Adrenal gland (tissue), 19 donors: ENCODE measurements at regions of chr4 and their contacts with region 1.

Region 1: DNA sequence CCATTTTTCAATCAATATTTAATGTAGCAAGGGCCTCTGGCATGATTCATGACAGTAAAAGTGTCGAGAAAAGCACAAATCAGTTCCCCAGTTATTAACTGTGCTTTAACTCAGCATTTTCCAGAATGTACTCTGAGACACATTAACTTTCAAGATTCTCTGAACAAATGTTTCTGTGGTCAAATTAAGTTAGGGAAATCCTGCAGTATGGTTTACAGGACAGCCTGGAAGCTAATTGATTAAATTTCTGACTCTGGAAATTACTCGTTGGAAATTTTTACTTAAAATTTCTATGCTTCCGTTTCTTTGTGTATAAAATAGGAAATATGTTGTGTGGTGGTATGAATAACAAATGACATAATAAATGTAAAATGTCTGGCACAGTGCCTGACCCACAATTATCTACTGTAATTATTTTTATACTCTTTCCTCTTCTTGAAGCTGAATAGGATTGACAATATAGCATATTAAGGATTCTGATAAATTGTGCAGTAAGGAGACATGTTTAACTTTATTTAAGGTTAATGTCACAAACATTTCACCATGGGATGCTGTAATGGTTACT is 33.7 kb downstream of the STK32B start:
- DNase-seq: no peak
- H3K4me3 ChIP-seq: no peak overlapping the region
- H3K27ac ChIP-seq: no peak overlapping the region
- H3K4me1 ChIP-seq: no peaks in the 10 kb centered on the region
- H3K27me3 ChIP-seq: no peaks in the 10 kb centered on the region
- CTCF ChIP-seq: no peak
- POLR2A ChIP-seq: no peak

Region 2: DNA sequence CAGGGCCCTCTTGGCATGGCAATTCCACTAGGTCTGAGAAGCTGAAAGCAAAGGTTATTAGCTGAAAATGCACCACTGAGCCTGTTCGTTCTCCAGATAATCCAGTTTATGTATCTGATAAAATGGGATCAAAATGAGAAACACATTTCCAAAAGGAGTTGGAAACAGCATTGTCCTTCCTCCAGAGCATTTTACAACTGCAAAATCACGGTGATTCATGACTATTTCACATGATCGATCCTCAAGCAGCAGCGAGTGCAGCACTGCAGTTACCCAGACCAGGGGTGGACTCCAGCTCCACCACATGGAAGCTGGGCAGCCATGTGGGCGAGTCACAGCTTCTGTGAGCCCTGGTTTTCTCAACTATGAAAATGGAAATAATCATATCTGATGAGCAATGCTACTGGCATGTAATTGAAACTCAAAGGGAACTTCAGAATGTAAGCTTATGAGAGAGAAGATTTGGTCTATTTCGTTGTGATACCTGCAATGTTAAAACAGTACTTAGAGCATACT is 304.2 kb before region 1 on chr4:
- intact Hi-C with region 1: loop called in 1 of 2 experiments (anchors 10 kb)
- DNase-seq: no peak
- H3K4me3 ChIP-seq: no peak overlapping the region
- H3K27ac ChIP-seq: no peak overlapping the region
- H3K4me1 ChIP-seq: no peaks in the 10 kb centered on the region
- H3K27me3 ChIP-seq: no peaks in the 10 kb centered on the region
- CTCF ChIP-seq: no peak
- POLR2A ChIP-seq: no peak

Region 3: DNA sequence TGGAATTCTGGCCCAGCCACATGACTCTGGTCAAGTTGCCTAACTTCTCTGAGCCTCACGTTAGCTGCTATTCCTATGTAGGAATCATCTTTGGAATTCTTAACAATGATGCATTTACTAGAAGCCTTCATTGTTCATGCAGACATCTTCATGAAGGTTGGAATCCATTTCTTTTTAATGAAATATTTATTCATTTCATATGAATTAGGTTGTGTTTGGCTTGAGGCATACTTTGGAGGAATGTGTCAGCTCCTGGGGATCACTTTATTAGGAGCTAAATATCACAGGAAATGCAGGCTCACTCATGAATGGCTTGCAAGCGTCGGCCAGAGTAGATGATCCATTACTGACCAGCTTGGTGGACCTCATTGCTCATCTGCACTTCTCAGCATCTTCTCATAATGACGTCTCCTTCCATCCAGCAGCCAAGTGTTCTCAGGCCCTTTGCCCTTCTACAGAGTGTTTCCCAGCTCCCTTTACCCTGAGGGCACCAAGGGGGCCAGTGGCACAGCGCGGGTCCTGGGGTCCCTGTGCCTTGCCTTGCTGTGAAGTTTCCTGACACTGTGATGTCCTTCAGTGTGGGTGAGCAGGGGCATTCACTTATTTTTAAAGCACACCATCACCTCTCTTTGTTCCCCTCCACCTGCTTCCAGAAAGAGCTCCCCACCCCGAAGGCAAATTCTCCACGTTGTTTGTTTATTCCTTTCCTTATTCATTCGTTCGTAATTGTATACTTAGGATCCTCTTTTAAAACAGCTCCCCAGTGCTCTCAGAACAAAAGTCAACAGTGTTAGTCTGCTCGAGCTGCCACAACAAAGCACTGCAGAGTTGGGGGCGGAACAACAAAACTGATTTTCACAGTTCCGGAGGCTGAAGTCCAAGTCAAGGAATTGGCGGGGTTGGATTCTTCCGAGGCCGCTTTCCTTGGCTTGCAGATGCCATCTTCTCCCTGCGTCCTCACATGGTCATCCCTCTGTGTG is 73.1 kb after region 1 on chr4:
- intact Hi-C with region 1: no loop called
- DNase-seq: no peak
- H3K4me3 ChIP-seq: no peak overlapping the region
- H3K27ac ChIP-seq: no peak overlapping the region
- H3K4me1 ChIP-seq: no peaks in the 10 kb centered on the region
- H3K27me3 ChIP-seq: no peaks in the 10 kb centered on the region
- CTCF ChIP-seq: no peak
- POLR2A ChIP-seq: no peak

Region 4: GRCh38 chr4:5575941-5576340 is 490.9 kb after region 1 on chr4:
- intact Hi-C with region 1: no loop called
- DNase-seq: no peak
- H3K4me3 ChIP-seq: no peak overlapping the region
- H3K27ac ChIP-seq: no peak overlapping the region
- H3K4me1 ChIP-seq: no peaks in the 10 kb centered on the region
- H3K27me3 ChIP-seq: no peaks in the 10 kb centered on the region
- CTCF ChIP-seq: no peak
- POLR2A ChIP-seq: no peak